ENCODE measurements at regions of chr17 and their contacts with region 1.

Region 1: GRCh38 chr17:81711814-81712467 is at the start of gene SLC25A10:
- DNase-seq: peak; percentile 93
- H3K4me3 ChIP-seq: peak within 1 kb of the TSS; percentile 76
- H3K27ac ChIP-seq: peak within 1 kb of the TSS; percentile 35
- H3K4me1 ChIP-seq: peaks cover 27% of the 10 kb centered on the region
- CTCF ChIP-seq: no peak
- total RNA-seq, gene SLC25A10: 46.3 and 46.9 TPM in 2 replicates

Region 2: GRCh38 chr17:81543339-81543675 is 168.6 kb before region 1 on chr17:
- CTCF ChIA-PET with region 1: no interaction called
- POLR2A ChIA-PET with region 1: no interaction called
- intact Hi-C with region 1: no loop called
- DNase-seq: no peak
- H3K4me3 ChIP-seq: no peak overlapping the region
- H3K27ac ChIP-seq: no peak overlapping the region
- H3K4me1 ChIP-seq: no peaks in the 10 kb centered on the region
- CTCF ChIP-seq: no peak

Region 3: DNA sequence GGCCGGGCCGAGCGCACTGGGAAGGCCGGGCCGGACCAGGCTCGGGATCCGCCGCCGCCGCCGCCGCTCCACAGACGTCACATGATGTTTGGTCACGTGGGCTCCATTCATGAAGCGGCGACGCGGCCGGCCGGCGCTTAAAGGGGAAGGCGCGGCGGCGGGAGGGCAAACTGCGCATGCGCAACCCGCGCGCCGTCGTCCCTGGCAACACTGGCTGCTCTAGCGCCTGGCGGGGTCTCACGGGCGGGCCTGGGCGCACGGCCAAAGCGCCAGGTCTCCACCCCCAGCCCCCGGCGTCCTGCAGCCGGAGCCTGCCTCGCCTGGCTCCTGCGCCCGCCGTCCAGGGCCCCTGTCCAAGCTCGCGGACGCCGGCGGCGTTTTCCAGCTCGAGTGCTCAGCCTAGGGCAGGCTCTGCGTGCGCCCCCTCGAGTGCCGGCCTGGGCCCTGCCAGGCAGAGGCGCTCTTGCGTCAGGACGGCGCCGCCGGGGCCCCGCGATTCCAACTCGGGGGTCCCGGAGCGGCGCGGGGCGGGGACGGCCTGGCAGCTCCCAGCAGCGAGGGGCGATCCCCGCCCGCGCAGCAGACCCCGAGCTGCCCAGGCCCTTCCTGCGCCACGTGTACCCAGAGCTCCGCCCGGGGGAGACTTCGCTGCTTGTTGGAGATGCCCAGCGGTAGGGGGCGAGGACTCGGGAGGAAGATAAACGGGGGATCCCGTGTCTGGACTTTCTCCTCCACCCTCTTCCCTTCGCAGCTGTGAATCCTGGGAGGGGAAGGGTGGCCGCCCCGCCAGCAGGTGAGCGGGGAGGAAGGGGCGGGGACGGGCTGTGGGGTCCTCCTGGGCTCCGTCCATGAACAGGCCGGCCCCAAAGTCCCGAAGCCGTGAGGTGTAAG is 216.0 kb after region 1 on chr17 and contains the start of gene MAFG:
- CTCF ChIA-PET with region 1: no interaction called
- POLR2A ChIA-PET with region 1: no interaction called
- intact Hi-C with region 1: loop called (anchors 2 kb)
- DNase-seq: peak; percentile 98
- H3K4me3 ChIP-seq: peak within 1 kb of the TSS; percentile 80
- H3K27ac ChIP-seq: peak within 1 kb of the TSS; percentile 60
- H3K4me1 ChIP-seq: peaks cover 34% of the 10 kb centered on the region
- CTCF ChIP-seq: peak; percentile 84
- total RNA-seq, gene MAFG: 16.9 and 22.7 TPM in 2 replicates

Measured in OCI-LY7 (cell line).